Motor neuron (in vitro differentiated cells): ENCODE measurements at regions of chr10 and their contacts with region 1.

Region 1: GRCh38 chr10:110746254-110746826 is 102.2 kb downstream of the RBM20 start:
- ATAC-seq: peak; percentile 48 to 94 (median 68)
- H3K4me3 ChIP-seq: no peak overlapping the region
- H3K27ac ChIP-seq: no peak overlapping the region
- H3K4me1 ChIP-seq: no peaks in the 10 kb centered on the region

Region 2: GRCh38 chr10:110610308-110610774 is 136.0 kb before region 1 on chr10:
- in situ Hi-C with region 1: loop called in 1 of 9 experiments (anchors 25 kb)
- ATAC-seq: peak; percentile 61 to 76 (median 68)
- H3K4me3 ChIP-seq: peak overlapping the region in 1 of 5 donors; percentile 0
- H3K27ac ChIP-seq: peak overlapping the region in 1 of 2 donors; percentile 15
- H3K4me1 ChIP-seq: peaks cover 6 to 10% of the 10 kb centered on the region in 2 donors